ENCODE measurements at regions of chr10 and their contacts with region 1.

Region 1: GRCh38 chr10:89701238-89702120 is at the start of gene KIF20B:
- DNase-seq: peak; percentile 94 to 97
- H3K4me3 ChIP-seq: peak within 1 kb of the TSS; percentile 55 to 68
- H3K27ac ChIP-seq: peak within 1 kb of the TSS; percentile 75 to 78
- H3K4me1 ChIP-seq: peaks cover 0 to 7% (median 3%) of the 10 kb centered on the region in 4 donors
- H3K27me3 ChIP-seq: no peaks in the 10 kb centered on the region
- CTCF ChIP-seq: peak; percentile 30 to 38

Region 2: GRCh38 chr10:89251409-89252224 is 449.9 kb before region 1 on chr10 and contains the start of gene LIPA:
- intact Hi-C with region 1: loop called (anchors 10 kb)
- DNase-seq: peak; percentile 95 to 98
- H3K4me3 ChIP-seq: peak within 1 kb of the TSS; percentile 93 to 94
- H3K27ac ChIP-seq: peak within 1 kb of the TSS; percentile 84 to 89
- H3K4me1 ChIP-seq: peaks cover 0 to 11% (median 7%) of the 10 kb centered on the region in 4 donors
- H3K27me3 ChIP-seq: no peaks in the 10 kb centered on the region
- CTCF ChIP-seq: peak in 1 of 2 experiments; percentile 6

Region 3: DNA sequence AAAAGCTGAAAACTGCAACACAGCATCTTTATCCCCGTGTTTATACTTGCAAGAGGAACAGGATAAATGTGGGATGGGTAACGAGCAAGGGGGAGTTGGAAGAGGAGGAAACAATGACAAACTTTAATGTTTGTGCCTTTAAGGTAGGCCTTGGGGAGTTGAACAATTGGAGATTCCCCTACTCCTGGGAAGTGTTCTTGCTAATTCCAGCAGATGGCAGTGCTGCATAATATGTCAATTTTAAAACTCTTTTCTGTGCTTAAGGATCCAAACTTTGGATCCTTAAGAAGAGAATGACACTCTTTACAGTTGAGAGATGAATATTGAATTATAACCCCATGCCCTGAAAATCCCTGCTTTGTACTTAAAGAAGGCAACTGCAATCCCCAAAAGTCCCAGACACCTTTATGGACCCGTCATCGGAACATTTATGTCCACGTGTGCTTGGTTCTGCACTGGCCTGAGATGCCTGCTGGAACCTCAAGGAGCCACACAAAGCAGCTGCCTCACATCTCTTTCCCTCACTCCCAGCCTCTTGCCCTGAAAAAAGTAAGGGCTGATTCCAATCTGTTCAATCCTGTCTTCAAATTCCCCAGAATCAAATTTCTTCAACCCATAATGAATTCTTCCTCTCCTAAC is 275.1 kb before region 1 on chr10:
- intact Hi-C with region 1: loop called (anchors 10 kb)
- DNase-seq: no peak
- H3K4me3 ChIP-seq: no peak overlapping the region
- H3K27ac ChIP-seq: no peak overlapping the region
- H3K4me1 ChIP-seq: no peaks in the 10 kb centered on the region
- H3K27me3 ChIP-seq: no peaks in the 10 kb centered on the region
- CTCF ChIP-seq: peak; percentile 87 to 91

Region 4: GRCh38 chr10:89659143-89660131 is 42.0 kb before region 1 on chr10:
- intact Hi-C with region 1: no loop called
- DNase-seq: no peak
- H3K4me3 ChIP-seq: no peak overlapping the region
- H3K27ac ChIP-seq: no peak overlapping the region
- H3K4me1 ChIP-seq: no peaks in the 10 kb centered on the region
- H3K27me3 ChIP-seq: no peaks in the 10 kb centered on the region
- CTCF ChIP-seq: no peak